Gastrocnemius medialis (tissue), 4 donors: ENCODE measurements at regions of chr5 and their contacts with region 1.

Region 1: DNA sequence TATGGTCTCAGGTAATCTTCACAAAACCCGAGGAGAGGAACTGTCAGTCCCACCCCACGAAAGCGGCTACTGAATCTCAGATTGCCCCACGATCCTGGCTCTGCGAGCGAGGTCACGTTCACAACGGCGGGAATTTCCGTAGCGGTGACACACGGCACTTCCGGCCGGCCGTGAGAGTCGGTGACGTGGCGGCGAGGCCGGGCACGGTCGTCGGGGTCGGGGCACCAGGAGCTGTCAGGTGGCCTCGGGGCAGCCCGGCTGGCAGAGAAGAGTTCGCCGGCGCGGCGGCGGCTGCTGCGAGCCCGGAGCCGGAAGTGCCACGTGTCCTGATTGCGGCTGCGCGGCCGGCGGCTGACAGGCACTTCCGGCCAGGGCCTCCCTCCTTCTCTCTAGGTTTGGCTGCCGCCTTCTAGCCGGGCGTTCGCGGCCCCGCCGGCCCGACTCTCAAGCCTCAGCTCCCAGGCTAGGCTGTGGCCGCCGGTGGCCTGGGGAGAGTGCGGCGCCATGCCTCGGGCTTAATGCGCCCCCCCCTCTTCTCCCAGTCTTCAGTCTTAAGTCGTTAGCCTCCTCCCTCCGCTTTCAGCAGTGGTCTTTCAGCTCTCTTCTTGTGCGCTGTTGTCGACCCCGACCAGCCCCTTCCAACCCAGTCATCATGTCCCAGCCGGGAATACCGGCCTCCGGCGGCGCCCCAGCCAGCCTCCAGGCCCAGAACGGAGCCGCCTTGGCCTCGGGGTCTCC is at the start of gene SEC24A:
- DNase-seq: peak; percentile 94 to 97
- ATAC-seq: peak; percentile 88
- H3K4me3 ChIP-seq: peak within 1 kb of the TSS; percentile 90 to 100 (median 94)
- H3K27ac ChIP-seq: peak within 1 kb of the TSS; percentile 98 to 100 (median 98)
- H3K4me1 ChIP-seq: peaks cover 23 to 35% of the 10 kb centered on the region in 2 donors
- H3K27me3 ChIP-seq: no peaks in the 10 kb centered on the region
- CTCF ChIP-seq: no peak
- POLR2A ChIP-seq: peak; percentile 80 to 86
- total RNA-seq, gene SEC24A: 11.4 to 18.3 (median 13.6) TPM

Region 2: DNA sequence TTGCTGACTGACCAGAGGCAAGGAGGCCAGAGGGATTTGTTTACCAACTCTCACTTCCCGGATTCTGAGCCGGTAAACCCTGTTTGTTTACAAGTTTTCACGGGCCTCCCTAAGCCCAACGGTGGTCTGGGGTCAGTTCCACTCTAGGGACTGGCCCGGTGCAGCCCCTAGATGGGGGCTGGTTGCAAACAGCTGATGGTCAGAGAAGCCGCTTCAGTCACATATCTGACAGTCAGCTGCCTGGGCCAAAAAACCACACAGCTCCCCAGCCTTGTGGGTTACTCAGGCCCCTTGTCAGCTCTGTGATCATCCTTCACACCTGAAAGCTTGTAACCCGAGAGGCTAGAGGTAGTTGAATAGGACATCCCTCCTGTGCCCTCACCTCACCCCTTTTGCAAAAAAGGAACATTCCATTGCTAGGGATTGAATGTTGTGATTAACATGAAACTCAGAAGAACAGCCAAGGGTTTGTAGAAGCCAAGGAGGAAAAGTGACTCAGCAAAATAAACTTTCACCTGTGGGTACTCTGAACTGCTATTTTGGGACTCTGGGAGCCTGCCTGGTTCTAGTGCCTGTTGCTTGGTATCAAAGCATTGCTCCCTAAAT is 56.4 kb before region 1 on chr5:
- in situ Hi-C with region 1: no loop called
- intact Hi-C with region 1: loop called (anchors 2 kb)
- DNase-seq: peak; percentile 79 to 82
- ATAC-seq: peak; percentile 82 to 86
- H3K4me3 ChIP-seq: no peak overlapping the region
- H3K27ac ChIP-seq: peak overlapping the region; percentile 81 to 94 (median 92)
- H3K4me1 ChIP-seq: peaks cover 44 to 56% of the 10 kb centered on the region in 2 donors
- H3K27me3 ChIP-seq: no peaks in the 10 kb centered on the region
- CTCF ChIP-seq: no peak
- POLR2A ChIP-seq: peak in 1 of 2 donors; percentile 19

Region 3: GRCh38 chr5:134637161-134637582 is 11.4 kb before region 1 on chr5:
- in situ Hi-C with region 1: no loop called
- intact Hi-C with region 1: loop called (anchors 1 kb)
- DNase-seq: no peak
- ATAC-seq: no peak
- H3K4me3 ChIP-seq: no peak overlapping the region
- H3K27ac ChIP-seq: no peak overlapping the region
- H3K4me1 ChIP-seq: no peaks in the 10 kb centered on the region
- H3K27me3 ChIP-seq: no peaks in the 10 kb centered on the region
- CTCF ChIP-seq: no peak
- POLR2A ChIP-seq: no peak